A549 (cell line): ENCODE measurements at regions of chr17 and their contacts with region 1.

Region 1: DNA sequence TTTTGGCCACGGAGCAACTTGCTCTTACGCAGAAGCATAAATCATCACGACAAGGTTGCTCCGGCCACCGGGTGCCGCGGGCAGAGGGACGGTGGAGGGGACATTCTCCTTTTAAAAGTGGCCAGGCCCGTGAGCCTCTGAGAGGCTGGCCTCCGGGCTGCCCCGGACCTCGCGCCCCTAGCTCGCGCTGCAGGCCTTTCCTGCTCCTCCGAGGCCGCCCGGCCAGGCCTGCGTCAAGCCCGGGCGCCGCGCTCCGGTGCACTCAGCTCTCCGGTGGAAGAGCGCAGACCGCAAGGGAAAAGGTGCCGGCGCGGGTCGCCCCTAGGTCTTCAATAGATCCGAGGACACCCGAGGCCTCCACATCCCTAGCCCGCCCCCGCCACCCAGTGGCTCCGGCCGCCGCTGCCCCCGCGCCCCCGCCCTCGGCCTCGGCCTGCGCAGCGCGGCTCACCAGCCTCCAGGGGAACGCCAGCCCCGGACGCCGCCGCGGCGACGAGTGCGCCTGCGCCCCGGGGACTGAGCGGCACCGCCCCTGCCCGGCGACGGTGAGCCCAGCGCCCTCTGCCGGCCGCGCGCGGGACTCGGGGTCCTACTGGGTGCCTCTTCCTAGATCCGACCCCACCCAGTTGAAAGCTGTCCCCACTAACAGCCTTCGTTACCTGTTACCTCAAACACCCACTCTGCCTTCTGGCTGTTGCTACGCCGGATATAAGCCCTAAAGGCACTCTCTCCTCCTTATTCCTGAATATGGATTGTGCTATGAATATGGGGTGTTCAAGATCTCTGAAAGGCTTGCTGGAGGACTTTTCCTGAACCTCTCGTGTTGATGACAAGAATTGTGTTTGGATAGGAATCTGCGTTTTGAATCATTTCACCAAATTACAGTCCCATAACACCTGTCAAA is at the start of gene LYRM9:
- DNase-seq: peak; percentile 78 to 90
- ATAC-seq: peak; percentile 95 to 99
- H3K4me3 ChIP-seq: peak within 1 kb of the TSS; percentile 48
- H3K27ac ChIP-seq: peak within 1 kb of the TSS; percentile 78 to 94
- H3K4me1 ChIP-seq: peaks cover 20% of the 10 kb centered on the region; the same call in 1 of the 3 replicates
- CTCF ChIP-seq: peak; percentile 99
- EP300 ChIP-seq: no peak
- POLR2A ChIP-seq: peak; percentile 89
- RAD21 ChIP-seq: peak; percentile 31 to 62; a peak in 3 of 5 replicates
- polyA plus RNA-seq, gene LYRM9: 2.5 and 2.7 TPM in 2 replicates

Region 2: GRCh38 chr17:27849474-27850185 is 43.5 kb before region 1 on chr17:
- CTCF ChIA-PET with region 1: no interaction called
- POLR2A ChIA-PET with region 1: no interaction called
- DNase-seq: no peak
- ATAC-seq: no peak
- H3K4me3 ChIP-seq: no peak overlapping the region
- H3K27ac ChIP-seq: no peak overlapping the region
- H3K4me1 ChIP-seq: no peaks in the 10 kb centered on the region
- CTCF ChIP-seq: no peak
- EP300 ChIP-seq: no peak
- POLR2A ChIP-seq: no peak
- RAD21 ChIP-seq: no peak

Region 3: DNA sequence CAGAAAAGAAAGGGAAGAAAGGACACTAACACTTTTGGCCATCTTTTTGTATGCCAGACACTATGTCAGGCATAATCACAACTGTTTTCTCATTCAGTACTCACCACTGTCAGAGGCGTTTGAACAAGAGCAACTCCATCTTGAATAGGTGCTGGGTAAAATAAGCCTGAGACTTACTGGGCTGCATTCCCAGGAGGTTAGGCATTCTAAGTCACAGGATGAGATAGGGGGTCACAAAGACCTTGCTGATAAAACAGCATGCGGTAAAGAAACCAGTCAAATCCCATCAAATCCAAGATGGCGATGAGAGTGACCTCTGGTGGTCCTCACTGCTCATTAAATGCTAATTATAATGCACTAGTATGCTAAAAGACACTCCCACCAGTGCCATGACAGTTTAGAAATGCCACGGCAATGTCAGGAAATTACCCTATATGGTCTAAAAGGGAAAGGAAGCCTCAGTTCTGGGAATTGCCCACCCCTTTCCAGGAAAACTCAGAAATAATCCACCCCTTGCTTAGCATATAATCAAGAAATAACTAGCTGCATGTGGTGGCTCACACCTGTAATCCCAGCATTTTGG is 14.9 kb after region 1 on chr17:
- CTCF ChIA-PET with region 1: interaction called, 18 read pairs
- POLR2A ChIA-PET with region 1: no interaction called
- DNase-seq: no peak
- ATAC-seq: no peak
- H3K4me3 ChIP-seq: no peak overlapping the region
- H3K27ac ChIP-seq: no peak overlapping the region
- H3K4me1 ChIP-seq: no peaks in the 10 kb centered on the region
- CTCF ChIP-seq: no peak
- EP300 ChIP-seq: no peak
- POLR2A ChIP-seq: no peak
- RAD21 ChIP-seq: no peak

Region 4: DNA sequence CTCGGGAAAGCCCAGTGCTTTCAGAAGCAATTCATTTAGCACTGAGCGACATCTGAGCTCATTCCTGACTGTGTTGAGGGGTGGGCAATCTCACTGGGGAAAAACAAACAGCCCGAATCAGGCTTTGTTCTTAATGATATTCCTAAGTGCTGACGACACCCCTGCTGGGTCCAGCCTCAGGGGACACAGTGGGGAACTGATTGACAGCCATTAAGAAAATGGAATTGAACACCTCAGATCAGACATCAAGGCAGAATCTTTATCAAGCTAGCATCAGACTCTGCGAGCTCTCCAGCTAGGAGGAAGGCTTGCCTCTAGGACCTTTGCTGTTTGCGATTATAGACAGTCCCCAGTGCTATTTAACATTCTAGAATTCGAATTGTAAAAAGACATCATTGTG is 22.6 kb after region 1 on chr17:
- CTCF ChIA-PET with region 1: interaction called, 11 read pairs
- POLR2A ChIA-PET with region 1: no interaction called
- DNase-seq: no peak
- ATAC-seq: no peak
- H3K4me3 ChIP-seq: no peak overlapping the region
- H3K27ac ChIP-seq: no peak overlapping the region
- H3K4me1 ChIP-seq: no peaks in the 10 kb centered on the region
- CTCF ChIP-seq: no peak
- EP300 ChIP-seq: no peak
- POLR2A ChIP-seq: no peak
- RAD21 ChIP-seq: no peak

Region 5: DNA sequence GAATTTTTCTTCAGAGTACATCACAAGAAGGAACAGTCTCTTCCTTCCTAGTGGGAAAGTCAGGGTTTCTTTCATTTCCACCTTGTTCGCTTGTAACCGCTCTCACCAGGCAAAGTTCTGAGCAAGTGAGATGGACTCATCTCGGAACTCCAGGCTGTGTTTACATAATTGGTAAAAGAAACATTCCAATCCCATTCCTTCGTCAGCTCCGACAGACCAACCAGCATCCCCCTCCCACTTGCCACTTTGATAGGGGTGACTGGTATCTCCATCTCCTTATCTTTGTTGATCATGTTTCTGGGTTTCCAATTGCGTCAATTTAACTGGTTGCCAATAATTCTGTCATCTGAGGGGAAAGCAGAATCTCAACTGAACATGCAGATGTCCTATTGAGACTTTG is 36.9 kb after region 1 on chr17:
- CTCF ChIA-PET with region 1: interaction called, 10 read pairs
- POLR2A ChIA-PET with region 1: interaction called, 3 read pairs
- DNase-seq: peak in 1 of 2 experiments; percentile 9
- ATAC-seq: no peak
- H3K4me3 ChIP-seq: no peak overlapping the region
- H3K27ac ChIP-seq: no peak overlapping the region
- H3K4me1 ChIP-seq: no peaks in the 10 kb centered on the region
- CTCF ChIP-seq: no peak
- EP300 ChIP-seq: no peak
- POLR2A ChIP-seq: no peak
- RAD21 ChIP-seq: no peak

Region 6: GRCh38 chr17:27939474-27940465 is 46.7 kb after region 1 on chr17:
- CTCF ChIA-PET with region 1: interaction called, 10 read pairs
- POLR2A ChIA-PET with region 1: no interaction called
- DNase-seq: no peak
- ATAC-seq: no peak
- H3K4me3 ChIP-seq: no peak overlapping the region
- H3K27ac ChIP-seq: no peak overlapping the region
- H3K4me1 ChIP-seq: no peaks in the 10 kb centered on the region
- CTCF ChIP-seq: no peak
- EP300 ChIP-seq: no peak
- POLR2A ChIP-seq: no peak
- RAD21 ChIP-seq: no peak

Region 7: GRCh38 chr17:28071891-28072606 is 178.9 kb after region 1 on chr17:
- CTCF ChIA-PET with region 1: no interaction called
- POLR2A ChIA-PET with region 1: no interaction called
- DNase-seq: no peak
- ATAC-seq: no peak
- H3K4me3 ChIP-seq: no peak overlapping the region
- H3K27ac ChIP-seq: no peak overlapping the region
- H3K4me1 ChIP-seq: no peaks in the 10 kb centered on the region
- CTCF ChIP-seq: no peak
- EP300 ChIP-seq: no peak
- POLR2A ChIP-seq: no peak
- RAD21 ChIP-seq: no peak